ENCODE measurements at regions of chr5 and their contacts with region 1.

Region 1: DNA sequence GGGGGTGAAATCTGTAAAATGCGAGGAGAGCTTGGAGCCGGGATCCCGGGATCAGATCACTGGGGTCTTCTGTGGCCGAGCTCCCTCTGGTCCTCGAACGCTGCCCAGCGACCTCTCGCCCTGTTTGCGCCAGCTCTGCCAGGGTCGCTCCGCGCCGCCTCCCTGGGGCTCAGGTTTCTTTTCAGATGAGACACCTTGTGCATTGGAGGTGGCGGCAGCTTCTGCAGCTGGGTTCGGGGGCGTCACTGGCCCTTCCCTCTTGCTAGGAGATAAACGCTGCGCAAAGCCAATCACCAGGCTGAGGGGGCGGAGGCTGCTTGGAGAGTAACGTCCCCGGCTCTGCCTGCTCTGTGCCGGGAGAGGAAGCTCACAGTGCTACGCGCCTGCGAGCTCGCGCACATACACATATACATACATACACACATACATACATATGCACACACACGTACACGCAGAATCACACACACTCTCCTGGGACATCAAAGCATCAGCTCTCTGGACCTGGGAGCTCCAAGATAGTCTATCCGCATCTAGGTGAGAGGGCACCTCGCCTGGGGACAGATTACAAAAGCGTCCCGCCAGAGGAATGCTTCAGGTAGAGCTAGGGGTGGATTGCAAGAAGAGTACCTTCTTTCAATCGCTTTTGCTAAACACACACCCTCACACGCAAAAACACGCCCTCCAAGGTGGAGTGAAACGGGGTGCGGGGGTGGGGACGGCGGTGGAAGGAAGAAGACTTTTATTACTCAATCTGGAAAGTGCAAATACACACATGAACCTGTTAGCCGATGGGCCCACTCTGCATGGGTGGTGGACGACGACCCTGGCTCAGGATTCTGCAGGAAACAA is at the start of gene ST8SIA4:
- DNase-seq: peak; percentile 86 to 97 (median 89)
- H3K4me3 ChIP-seq: peak within 1 kb of the TSS; percentile 88 to 89
- H3K4me3 Mint-ChIP-seq: peak within 1 kb of the TSS; percentile 89 to 100 (median 96)
- H3K27ac ChIP-seq: peak within 1 kb of the TSS; percentile 91
- H3K27ac Mint-ChIP-seq: peak within 1 kb of the TSS; percentile 97 to 98 (median 98)
- H3K4me1 ChIP-seq: peaks cover 34% of the 10 kb centered on the region
- H3K4me1 Mint-ChIP-seq: peaks cover 26 to 70% (median 42%) of the 10 kb centered on the region in 4 donors
- H3K27me3 ChIP-seq: no peaks in the 10 kb centered on the region
- H3K27me3 Mint-ChIP-seq: no peaks in the 10 kb centered on the region
- total RNA-seq, gene ST8SIA4: 27.7 to 28.7 TPM

Region 2: GRCh38 chr5:100479079-100479688 is 424.1 kb before region 1 on chr5:
- CTCF ChIA-PET with region 1: no interaction called
- POLR2A ChIA-PET with region 1: no interaction called
- intact Hi-C with region 1: no loop called
- DNase-seq: peak in 4 of 5 donors; percentile 26 to 34 (median 32)
- H3K4me3 ChIP-seq: no peak overlapping the region
- H3K4me3 Mint-ChIP-seq: no peak overlapping the region
- H3K27ac ChIP-seq: no peak overlapping the region
- H3K27ac Mint-ChIP-seq: no peak overlapping the region
- H3K4me1 ChIP-seq: no peaks in the 10 kb centered on the region
- H3K4me1 Mint-ChIP-seq: no peaks in the 10 kb centered on the region
- H3K27me3 ChIP-seq: no peaks in the 10 kb centered on the region
- H3K27me3 Mint-ChIP-seq: no peaks in the 10 kb centered on the region

Region 3: GRCh38 chr5:100623719-100624118 is 279.5 kb before region 1 on chr5:
- CTCF ChIA-PET with region 1: interaction called, 14 read pairs
- POLR2A ChIA-PET with region 1: interaction called, 4 read pairs
- intact Hi-C with region 1: loop called (anchors 2 kb)
- DNase-seq: peak in 4 of 5 donors; percentile 28 to 49 (median 34)
- H3K4me3 ChIP-seq: no peak overlapping the region
- H3K4me3 Mint-ChIP-seq: no peak overlapping the region
- H3K27ac ChIP-seq: no peak overlapping the region
- H3K27ac Mint-ChIP-seq: no peak overlapping the region
- H3K4me1 ChIP-seq: no peaks in the 10 kb centered on the region
- H3K4me1 Mint-ChIP-seq: no peaks in the 10 kb centered on the region
- H3K27me3 ChIP-seq: no peaks in the 10 kb centered on the region
- H3K27me3 Mint-ChIP-seq: peaks cover 0 to 2% of the 10 kb centered on the region in 2 donors

Region 4: GRCh38 chr5:100777680-100778281 is 125.5 kb before region 1 on chr5:
- CTCF ChIA-PET with region 1: interaction called, 13 read pairs
- POLR2A ChIA-PET with region 1: interaction called, 80 read pairs
- intact Hi-C with region 1: loop called (anchors 1 kb)
- DNase-seq: no peak
- H3K4me3 ChIP-seq: no peak overlapping the region
- H3K4me3 Mint-ChIP-seq: peak overlapping the region in 3 of 8 donors; percentile 7 to 26 (median 9)
- H3K27ac ChIP-seq: no peak overlapping the region
- H3K27ac Mint-ChIP-seq: peak overlapping the region in 2 of 7 donors; percentile 4 to 52
- H3K4me1 ChIP-seq: peaks cover 30% of the 10 kb centered on the region
- H3K4me1 Mint-ChIP-seq: peaks cover 22 to 32% (median 27%) of the 10 kb centered on the region in 4 donors
- H3K27me3 ChIP-seq: no peaks in the 10 kb centered on the region
- H3K27me3 Mint-ChIP-seq: no peaks in the 10 kb centered on the region

Region 5: GRCh38 chr5:100852988-100853449 is 50.2 kb before region 1 on chr5:
- CTCF ChIA-PET with region 1: interaction called, 6 read pairs
- POLR2A ChIA-PET with region 1: interaction called, 45 read pairs
- intact Hi-C with region 1: loop called (anchors 2 kb)
- DNase-seq: no peak
- H3K4me3 ChIP-seq: no peak overlapping the region
- H3K4me3 Mint-ChIP-seq: peak overlapping the region; percentile 8 to 70 (median 56)
- H3K27ac ChIP-seq: peak overlapping the region; percentile 27
- H3K27ac Mint-ChIP-seq: peak overlapping the region; percentile 54 to 86 (median 77)
- H3K4me1 ChIP-seq: peaks cover 51% of the 10 kb centered on the region
- H3K4me1 Mint-ChIP-seq: peaks cover 31 to 42% (median 34%) of the 10 kb centered on the region in 4 donors
- H3K27me3 ChIP-seq: no peaks in the 10 kb centered on the region
- H3K27me3 Mint-ChIP-seq: no peaks in the 10 kb centered on the region

Region 6: DNA sequence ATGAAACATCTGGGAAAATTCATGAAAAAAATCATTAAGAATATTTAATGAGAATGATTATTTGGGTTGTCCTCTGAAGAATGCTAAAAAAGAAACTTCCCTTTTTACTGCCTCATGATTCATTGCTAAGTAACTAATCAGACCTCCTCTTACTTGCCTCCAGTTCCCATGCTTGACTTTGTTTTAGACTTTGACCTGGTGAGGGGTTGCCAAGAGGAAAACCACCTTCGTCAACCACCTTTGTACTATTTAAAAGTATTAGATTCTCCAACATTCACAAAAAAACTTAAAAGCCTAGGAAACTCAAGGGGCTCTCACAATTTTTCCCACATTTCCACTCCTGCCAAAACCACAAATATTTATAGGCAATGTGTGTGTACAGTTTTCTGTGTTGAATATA is 115.0 kb after region 1 on chr5:
- CTCF ChIA-PET with region 1: interaction called, 3 read pairs
- POLR2A ChIA-PET with region 1: interaction called, 3 read pairs
- intact Hi-C with region 1: loop called (anchors 5 kb)
- DNase-seq: no peak
- H3K4me3 ChIP-seq: no peak overlapping the region
- H3K4me3 Mint-ChIP-seq: no peak overlapping the region
- H3K27ac ChIP-seq: no peak overlapping the region
- H3K27ac Mint-ChIP-seq: no peak overlapping the region
- H3K4me1 ChIP-seq: no peaks in the 10 kb centered on the region
- H3K4me1 Mint-ChIP-seq: no peaks in the 10 kb centered on the region
- H3K27me3 ChIP-seq: no peaks in the 10 kb centered on the region
- H3K27me3 Mint-ChIP-seq: no peaks in the 10 kb centered on the region